ENCODE measurements at regions of chr9 and their contacts with region 1.

Region 1: DNA sequence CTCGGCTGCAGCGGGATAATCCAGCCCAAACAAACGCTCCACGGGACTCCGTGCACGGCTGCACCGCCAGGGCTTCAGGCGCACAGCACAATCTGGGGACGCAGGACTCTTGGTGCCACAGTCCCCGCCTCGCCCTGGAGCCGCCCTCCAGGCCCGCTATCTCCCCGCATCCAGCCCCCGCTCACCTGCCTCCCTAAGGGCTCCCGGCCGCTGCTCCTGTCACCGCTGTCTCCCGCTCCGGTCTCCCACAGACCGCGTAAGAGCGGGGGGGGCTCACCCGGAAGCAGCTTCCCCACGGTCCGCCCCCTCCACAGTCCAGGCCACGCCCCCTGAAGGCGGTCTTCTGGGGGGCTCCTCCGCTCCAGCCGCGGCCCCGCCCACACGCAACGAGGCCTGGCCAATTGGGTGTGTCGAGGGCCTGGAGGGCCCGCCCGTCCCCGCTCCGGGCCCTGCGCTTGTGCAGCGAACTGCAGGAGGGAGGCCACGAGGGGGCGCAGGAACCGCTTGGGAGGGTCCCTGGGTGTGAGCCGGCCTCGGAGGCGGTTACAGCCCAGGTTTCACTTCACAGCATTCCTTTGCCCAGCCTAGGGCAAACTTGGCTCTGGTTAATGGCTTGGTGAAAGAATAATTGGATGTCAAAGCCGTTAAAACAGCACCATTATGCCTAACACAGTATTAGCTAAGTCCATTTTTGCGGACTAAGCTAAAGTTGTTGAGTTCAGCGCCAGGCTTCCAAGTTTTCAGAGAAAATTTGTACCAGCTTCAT is at the start of gene ALAD:
- DNase-seq: peak; percentile 99
- H3K4me3 Mint-ChIP-seq: peak within 1 kb of the TSS; percentile 94
- H3K27ac Mint-ChIP-seq: peak within 1 kb of the TSS; percentile 62
- H3K4me1 Mint-ChIP-seq: peaks cover 20% of the 10 kb centered on the region
- H3K27me3 Mint-ChIP-seq: no peaks in the 10 kb centered on the region
- total RNA-seq, gene ALAD: 27.9 and 28.3 TPM in 2 replicates

Region 2: DNA sequence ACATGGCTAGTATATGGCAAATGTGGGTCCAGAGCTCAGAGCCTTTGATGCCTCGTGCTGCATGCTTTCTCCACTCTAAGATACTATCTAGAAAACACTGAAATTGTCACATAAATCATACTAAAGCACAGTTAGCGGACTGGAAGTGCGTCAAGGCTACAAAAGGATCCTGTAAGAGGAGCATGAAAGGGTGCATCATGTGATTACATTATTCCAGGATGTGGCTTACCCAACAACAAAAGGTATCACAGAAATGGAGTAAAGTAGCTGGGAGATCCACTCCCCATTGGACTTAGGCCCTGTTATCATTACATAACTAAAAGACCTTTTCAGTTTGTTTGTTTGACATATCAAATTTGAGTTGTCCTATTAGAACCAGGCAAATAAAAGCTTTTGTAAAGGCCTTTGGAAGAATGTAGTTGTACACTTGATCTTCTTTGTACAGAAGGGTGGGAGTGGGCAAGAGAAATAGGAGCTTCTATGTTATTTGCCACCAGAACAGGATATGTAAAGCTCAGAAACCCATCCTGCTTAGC is 173.0 kb before region 1 on chr9:
- intact Hi-C with region 1: no loop called
- DNase-seq: no peak
- H3K4me3 Mint-ChIP-seq: no peak overlapping the region
- H3K27ac Mint-ChIP-seq: no peak overlapping the region
- H3K4me1 Mint-ChIP-seq: peaks cover 26% of the 10 kb centered on the region
- H3K27me3 Mint-ChIP-seq: no peaks in the 10 kb centered on the region

Region 3: DNA sequence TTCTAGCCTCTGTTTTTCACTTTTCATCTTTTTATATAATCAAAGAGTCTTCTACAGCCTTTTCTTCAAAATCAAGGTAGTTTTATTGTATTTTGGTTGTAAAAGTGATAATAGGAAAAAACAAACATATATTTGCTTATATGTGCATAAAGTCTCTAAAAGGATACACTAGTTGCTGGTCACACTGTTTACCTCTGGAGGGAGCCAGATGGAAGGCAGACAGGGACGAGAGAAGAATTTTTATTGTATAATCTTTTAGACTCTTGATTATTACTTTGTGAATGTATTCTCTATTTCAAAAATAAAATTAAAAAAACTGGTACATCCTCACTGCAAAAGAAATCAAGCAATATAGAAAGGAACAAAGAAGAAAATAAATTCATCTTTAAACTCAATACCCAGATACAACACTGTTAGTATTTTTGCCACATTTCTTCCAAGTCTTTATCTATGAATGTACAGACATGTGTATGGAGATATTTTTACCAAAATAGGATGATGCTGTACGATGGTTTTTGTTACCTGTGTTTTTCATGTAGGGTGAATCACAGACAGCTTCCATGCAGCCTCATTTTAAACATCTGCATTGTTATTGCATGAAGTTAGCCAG is 91.9 kb before region 1 on chr9:
- intact Hi-C with region 1: loop called (anchors 2 kb)
- DNase-seq: no peak
- H3K4me3 Mint-ChIP-seq: no peak overlapping the region
- H3K27ac Mint-ChIP-seq: no peak overlapping the region
- H3K4me1 Mint-ChIP-seq: peaks cover 12% of the 10 kb centered on the region
- H3K27me3 Mint-ChIP-seq: peaks cover 3% of the 10 kb centered on the region

Region 4: DNA sequence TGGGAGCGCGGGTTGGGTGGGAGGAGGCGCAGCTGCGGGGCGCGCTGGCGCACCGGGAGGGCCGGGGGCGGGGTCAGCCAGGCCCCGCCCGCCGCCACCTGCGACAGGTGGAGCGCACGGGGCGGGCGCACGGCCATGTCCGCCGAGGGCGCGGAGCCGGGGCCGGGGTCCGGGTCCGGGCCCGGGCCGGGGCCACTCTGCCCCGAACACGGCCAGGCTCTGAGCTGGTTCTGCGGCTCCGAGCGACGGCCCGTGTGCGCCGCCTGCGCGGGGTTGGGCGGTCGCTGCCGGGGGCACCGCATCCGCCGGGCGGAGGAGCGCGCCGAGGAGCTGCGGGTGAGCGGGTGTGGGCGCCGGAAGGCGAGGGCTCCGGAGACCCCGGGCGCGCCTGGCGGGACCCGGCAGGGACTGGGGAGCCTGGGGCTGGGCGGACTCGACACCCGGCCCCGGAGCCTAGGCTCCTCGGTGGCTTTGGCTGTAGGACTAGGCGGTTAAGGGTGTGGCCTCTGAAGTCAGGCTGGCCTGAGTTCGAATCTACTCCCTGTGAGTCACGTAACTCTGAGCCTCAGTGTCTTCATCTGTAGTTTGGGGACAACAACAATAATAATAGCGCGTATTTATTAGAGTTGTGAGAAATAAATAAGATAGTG is 51.6 kb before region 1 on chr9 and contains the start of gene BSPRY:
- intact Hi-C with region 1: loop called (anchors 1 kb)
- DNase-seq: peak; percentile 43
- H3K4me3 Mint-ChIP-seq: peak within 1 kb of the TSS; percentile 88
- H3K27ac Mint-ChIP-seq: peak within 1 kb of the TSS; percentile 97
- H3K4me1 Mint-ChIP-seq: peaks cover 44% of the 10 kb centered on the region
- H3K27me3 Mint-ChIP-seq: no peaks in the 10 kb centered on the region
- total RNA-seq, gene BSPRY: 11.1 and 12.5 TPM in 2 replicates

Region 5: DNA sequence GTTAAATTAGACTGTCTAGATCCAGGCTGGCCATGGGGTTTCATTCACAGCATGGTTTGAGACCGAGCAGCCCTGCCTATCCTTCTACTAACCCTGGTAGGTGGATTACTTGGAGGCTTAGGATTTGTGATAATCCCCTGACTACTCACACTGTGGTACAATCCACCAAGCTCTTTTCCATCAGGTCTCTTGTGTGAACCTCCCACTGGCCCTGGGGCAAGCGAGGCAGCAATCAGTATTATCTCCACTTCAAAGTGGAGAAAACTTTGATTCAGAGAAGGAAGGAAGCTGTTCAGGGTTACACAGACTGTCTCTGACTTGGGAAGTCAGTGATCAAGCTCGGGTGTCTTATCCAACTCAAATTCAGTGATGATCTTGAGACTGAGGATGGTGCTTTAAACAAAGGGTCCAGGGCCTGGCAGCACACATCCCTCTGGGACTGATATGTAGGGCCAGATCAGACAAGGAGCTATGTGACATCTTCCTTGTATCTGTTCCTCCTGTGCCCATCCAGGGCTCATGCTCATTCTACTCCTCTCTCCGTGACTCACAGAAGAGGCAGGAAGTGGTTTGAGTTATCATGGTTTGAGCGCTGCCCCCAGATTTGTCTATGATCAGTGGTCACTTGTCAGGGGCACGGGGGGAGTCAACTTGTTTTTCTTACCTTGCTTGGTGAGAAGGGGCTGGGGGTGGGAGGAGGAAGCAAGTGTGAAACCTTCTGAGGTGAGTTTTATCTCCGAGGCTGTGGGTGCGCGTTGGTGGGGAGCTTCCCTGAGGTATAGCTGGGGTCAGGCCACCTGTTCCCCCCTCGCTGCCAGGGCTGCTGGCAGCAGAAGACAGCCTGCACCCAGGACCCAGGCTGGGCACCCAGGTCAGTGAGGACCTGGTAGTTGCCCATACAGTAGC is 110.9 kb after region 1 on chr9:
- intact Hi-C with region 1: loop called (anchors 1 kb)
- DNase-seq: peak; percentile 66
- H3K4me3 Mint-ChIP-seq: peak overlapping the region; percentile 54
- H3K27ac Mint-ChIP-seq: peak overlapping the region; percentile 96
- H3K4me1 Mint-ChIP-seq: peaks cover 56% of the 10 kb centered on the region
- H3K27me3 Mint-ChIP-seq: peaks cover 4% of the 10 kb centered on the region

Region 6: GRCh38 chr9:113657703-113658544 is 256.7 kb after region 1 on chr9:
- intact Hi-C with region 1: loop called (anchors 1 kb)
- DNase-seq: peak; percentile 64
- H3K4me3 Mint-ChIP-seq: no peak overlapping the region
- H3K27ac Mint-ChIP-seq: no peak overlapping the region
- H3K4me1 Mint-ChIP-seq: peaks cover 9% of the 10 kb centered on the region
- H3K27me3 Mint-ChIP-seq: peaks cover 21% of the 10 kb centered on the region